ENCODE measurements at regions of chr4 and their contacts with region 1.

Region 1: GRCh38 chr4:88613417-88613875 is 21.2 kb downstream of the HERC3 start:
- DNase-seq: peak; percentile 58
- ATAC-seq: peak; percentile 92
- H3K4me3 Mint-ChIP-seq: peak overlapping the region; percentile 42
- H3K27ac Mint-ChIP-seq: peak overlapping the region; percentile 85
- H3K4me1 Mint-ChIP-seq: peaks cover 54% of the 10 kb centered on the region
- H3K27me3 Mint-ChIP-seq: no peaks in the 10 kb centered on the region

Region 2: GRCh38 chr4:88442703-88443191 is 170.7 kb before region 1 on chr4:
- CTCF ChIA-PET with region 1: no interaction called
- POLR2A ChIA-PET with region 1: no interaction called
- DNase-seq: no peak
- ATAC-seq: no peak
- H3K4me3 Mint-ChIP-seq: no peak overlapping the region
- H3K27ac Mint-ChIP-seq: no peak overlapping the region
- H3K4me1 Mint-ChIP-seq: no peaks in the 10 kb centered on the region
- H3K27me3 Mint-ChIP-seq: no peaks in the 10 kb centered on the region

Region 3: GRCh38 chr4:88591787-88592599 is 21.5 kb before region 1 on chr4 and contains the start of gene HERC3:
- CTCF ChIA-PET with region 1: interaction called, 27 read pairs
- POLR2A ChIA-PET with region 1: interaction called, 18 read pairs
- DNase-seq: peak; percentile 87
- ATAC-seq: peak; percentile 96
- H3K4me3 Mint-ChIP-seq: peak within 1 kb of the TSS; percentile 86
- H3K27ac Mint-ChIP-seq: peak within 1 kb of the TSS; percentile 79
- H3K4me1 Mint-ChIP-seq: peaks cover 34% of the 10 kb centered on the region
- H3K27me3 Mint-ChIP-seq: peaks cover 5% of the 10 kb centered on the region
- total RNA-seq, gene HERC3: 22.7 to 26.1 TPM

Region 4: GRCh38 chr4:88600176-88600838 is 13.1 kb before region 1 on chr4:
- CTCF ChIA-PET with region 1: interaction called, 25 read pairs
- POLR2A ChIA-PET with region 1: interaction called, 4 read pairs
- DNase-seq: no peak
- ATAC-seq: no peak
- H3K4me3 Mint-ChIP-seq: no peak overlapping the region
- H3K27ac Mint-ChIP-seq: no peak overlapping the region
- H3K4me1 Mint-ChIP-seq: peaks cover 48% of the 10 kb centered on the region
- H3K27me3 Mint-ChIP-seq: no peaks in the 10 kb centered on the region

Region 5: DNA sequence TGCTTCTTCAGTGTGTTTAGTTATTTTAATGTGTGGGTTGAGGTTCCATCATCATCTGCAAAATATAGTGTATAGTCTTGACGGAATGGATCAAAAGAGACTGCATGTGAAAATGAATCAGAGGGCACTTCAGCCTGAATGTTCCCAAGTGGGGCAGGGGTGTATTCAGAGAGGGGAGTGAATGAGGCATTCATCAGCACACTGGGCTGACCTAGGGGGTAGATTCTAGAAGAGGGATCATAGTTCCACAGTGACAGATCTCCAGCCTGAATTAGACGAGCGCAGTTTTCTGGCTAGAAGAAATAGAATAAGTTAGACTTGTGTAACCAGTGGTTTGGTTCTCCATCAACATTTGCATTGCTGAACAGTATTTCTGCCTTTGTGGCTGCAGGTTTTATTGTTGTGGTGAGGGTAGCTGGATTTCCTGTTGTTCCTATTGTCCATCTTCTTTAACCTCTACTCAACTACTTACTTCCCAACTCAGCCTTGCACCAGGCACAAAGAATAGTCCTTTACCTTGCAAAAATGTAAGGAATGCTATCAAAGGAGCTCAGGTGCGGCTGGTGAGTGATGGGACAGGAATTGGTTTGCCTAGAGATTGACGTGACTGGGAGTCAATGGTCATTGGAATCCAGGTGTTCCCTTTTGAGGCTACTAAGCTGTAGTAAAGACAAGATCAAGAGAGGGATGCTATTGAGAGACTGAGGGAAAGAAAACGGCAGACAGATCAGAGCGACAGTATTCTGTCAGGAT is 33.3 kb after region 1 on chr4:
- CTCF ChIA-PET with region 1: no interaction called
- POLR2A ChIA-PET with region 1: no interaction called
- DNase-seq: no peak
- ATAC-seq: no peak
- H3K4me3 Mint-ChIP-seq: no peak overlapping the region
- H3K27ac Mint-ChIP-seq: no peak overlapping the region
- H3K4me1 Mint-ChIP-seq: peaks cover 9% of the 10 kb centered on the region
- H3K27me3 Mint-ChIP-seq: no peaks in the 10 kb centered on the region

Region 6: GRCh38 chr4:88659055-88659889 is 45.8 kb after region 1 on chr4:
- CTCF ChIA-PET with region 1: interaction called, 15 read pairs
- POLR2A ChIA-PET with region 1: no interaction called
- DNase-seq: peak; percentile 52
- ATAC-seq: peak; percentile 84
- H3K4me3 Mint-ChIP-seq: no peak overlapping the region
- H3K27ac Mint-ChIP-seq: no peak overlapping the region
- H3K4me1 Mint-ChIP-seq: peaks cover 10% of the 10 kb centered on the region
- H3K27me3 Mint-ChIP-seq: no peaks in the 10 kb centered on the region

Measured in activated CD8-positive, alpha-beta T cell treated with anti-CD3 and anti-CD28 coated beads, Interleukin-2, amount 10 ng/mL, durations not matched to agents 7 days and 5 days (primary cell).